Heart left ventricle (tissue), 16 donors: ENCODE measurements at regions of chr18 and their contacts with region 1.

Region 1: GRCh38 chr18:61702007-61702406 is 190.8 kb downstream of the RNF152 start:
- DNase-seq: no peak
- ATAC-seq: peak in 3 of 4 donors; percentile 20 to 67 (median 36)
- H3K4me3 ChIP-seq: no peak overlapping the region
- H3K27ac ChIP-seq: peak overlapping the region in 4 of 12 donors; percentile 16 to 57 (median 32)
- H3K4me1 ChIP-seq: no peaks in the 10 kb centered on the region
- H3K27me3 ChIP-seq: no peaks in the 10 kb centered on the region
- CTCF ChIP-seq: no peak
- POLR2A ChIP-seq: no peak

Region 2: GRCh38 chr18:61643884-61644647 is 57.9 kb before region 1 on chr18:
- intact Hi-C with region 1: loop called in 1 of 10 experiments (anchors 10 kb)
- DNase-seq: no peak
- ATAC-seq: no peak
- H3K4me3 ChIP-seq: no peak overlapping the region
- H3K27ac ChIP-seq: no peak overlapping the region
- H3K4me1 ChIP-seq: no peaks in the 10 kb centered on the region
- H3K27me3 ChIP-seq: no peaks in the 10 kb centered on the region
- CTCF ChIP-seq: no peak
- POLR2A ChIP-seq: no peak

Region 3: DNA sequence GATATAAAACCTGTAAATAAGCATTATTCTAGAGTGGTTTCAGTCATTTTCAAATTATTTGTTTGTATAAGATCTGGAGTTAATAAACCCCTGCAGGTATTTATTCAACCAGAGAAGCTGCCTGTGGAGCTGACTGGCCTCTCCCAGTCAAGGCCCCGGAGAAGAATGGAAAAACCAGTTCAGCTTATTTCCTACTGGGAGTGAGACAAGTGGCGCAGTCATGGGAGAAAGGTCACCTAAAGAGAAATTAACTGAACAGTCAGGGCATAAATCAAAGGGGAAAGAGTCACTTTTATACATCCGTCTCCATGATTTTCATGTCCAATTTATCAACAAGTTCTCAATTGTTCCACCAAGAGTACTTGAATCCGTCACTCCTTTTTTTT is 50.1 kb before region 1 on chr18:
- intact Hi-C with region 1: loop called in 2 of 10 experiments (anchors 10 kb)
- DNase-seq: no peak
- ATAC-seq: no peak
- H3K4me3 ChIP-seq: no peak overlapping the region
- H3K27ac ChIP-seq: no peak overlapping the region
- H3K4me1 ChIP-seq: peaks cover 0 to 5% (median 0%) of the 10 kb centered on the region in 12 donors
- H3K27me3 ChIP-seq: no peaks in the 10 kb centered on the region
- CTCF ChIP-seq: no peak
- POLR2A ChIP-seq: no peak